HEK293 (cell line): ENCODE measurements at regions of chr16 and their contacts with region 1.

Region 1: DNA sequence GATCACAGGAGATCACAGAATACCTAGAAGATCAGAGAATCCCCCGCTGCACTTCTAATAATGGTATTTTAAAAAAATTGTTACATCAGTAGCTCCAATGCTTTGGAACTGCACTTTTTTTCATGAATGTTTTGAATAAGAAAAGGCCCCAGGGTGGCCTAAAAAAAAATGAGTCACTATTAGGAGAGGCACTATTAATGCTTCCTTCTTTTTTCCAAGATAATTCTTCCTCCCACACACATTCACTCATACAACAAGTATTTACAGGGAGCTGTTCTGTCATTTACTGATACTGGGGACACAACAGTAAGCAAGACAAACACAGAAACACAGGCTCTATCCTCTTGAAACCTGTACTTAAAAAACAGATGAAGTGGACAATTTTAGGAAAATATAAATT is 675 bp upstream of the PDZD9 start:
- H3K4me3 ChIP-seq: no peak overlapping the region
- H3K27ac ChIP-seq: no peak overlapping the region
- H3K4me1 ChIP-seq: no peaks in the 10 kb centered on the region; the same call in 1 of the 2 replicates
- CTCF ChIP-seq: no peak

Region 2: GRCh38 chr16:21989133-21989532 is 12.5 kb before region 1 on chr16:
- CTCF ChIA-PET with region 1: interaction called, 10 read pairs
- POLR2A ChIA-PET with region 1: interaction called, 3 read pairs
- H3K4me3 ChIP-seq: no peak overlapping the region
- H3K27ac ChIP-seq: no peak overlapping the region
- H3K4me1 ChIP-seq: peaks cover 13% of the 10 kb centered on the region
- CTCF ChIP-seq: no peak

Region 3: DNA sequence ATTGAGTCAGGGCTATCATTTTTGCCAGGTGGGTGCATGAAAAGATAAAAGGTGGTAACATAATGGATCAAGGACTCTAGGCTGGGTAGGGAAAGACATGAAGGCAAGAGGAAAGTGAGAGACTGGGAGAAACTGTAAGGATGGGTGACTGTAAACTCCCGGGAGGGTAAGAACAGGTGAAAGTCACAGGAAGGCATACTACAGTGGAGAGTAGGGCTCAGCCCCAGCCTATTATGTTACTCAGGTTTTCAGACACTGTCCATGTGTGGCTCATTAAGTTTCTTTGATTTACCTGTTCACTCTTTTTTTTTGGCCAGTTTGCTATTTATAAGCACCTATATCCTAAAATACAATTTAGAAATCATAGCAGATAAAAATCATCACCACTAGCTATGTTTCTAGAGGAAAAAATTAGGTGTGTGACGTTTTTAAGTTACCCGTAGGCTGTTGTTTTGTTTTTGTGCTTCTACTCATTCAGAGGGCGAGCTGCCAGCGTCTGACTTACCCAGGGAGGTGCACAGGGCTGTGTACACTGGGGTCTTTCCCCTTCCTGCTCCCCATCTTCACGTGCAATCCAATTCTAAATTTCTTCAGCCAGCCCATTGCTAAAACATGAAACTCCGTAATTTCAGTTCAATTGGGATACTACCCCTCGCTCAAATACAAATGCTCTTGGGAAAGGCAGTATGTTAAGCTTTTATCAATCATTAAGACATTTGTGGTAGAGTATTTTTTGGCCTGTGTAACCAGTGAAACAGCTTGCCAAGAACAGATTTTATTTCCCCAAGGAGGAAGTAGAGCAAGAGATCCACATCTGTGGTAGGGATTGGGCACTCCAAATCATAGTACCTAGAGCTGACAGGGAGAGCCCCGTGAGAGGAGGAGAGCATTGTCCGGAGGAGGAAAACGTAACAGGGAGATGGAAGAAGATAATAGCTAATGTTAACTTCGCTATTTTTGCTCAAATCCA is 69.1 kb after region 1 on chr16:
- CTCF ChIA-PET with region 1: interaction called, 302 read pairs
- POLR2A ChIA-PET with region 1: interaction called, 7 read pairs
- H3K4me3 ChIP-seq: no peak overlapping the region
- H3K27ac ChIP-seq: no peak overlapping the region
- H3K4me1 ChIP-seq: 0 out of 2 replicates have a peak, but pooled peaks cover 2% of the 10 kb centered on the region
- CTCF ChIP-seq: no peak

Region 4: DNA sequence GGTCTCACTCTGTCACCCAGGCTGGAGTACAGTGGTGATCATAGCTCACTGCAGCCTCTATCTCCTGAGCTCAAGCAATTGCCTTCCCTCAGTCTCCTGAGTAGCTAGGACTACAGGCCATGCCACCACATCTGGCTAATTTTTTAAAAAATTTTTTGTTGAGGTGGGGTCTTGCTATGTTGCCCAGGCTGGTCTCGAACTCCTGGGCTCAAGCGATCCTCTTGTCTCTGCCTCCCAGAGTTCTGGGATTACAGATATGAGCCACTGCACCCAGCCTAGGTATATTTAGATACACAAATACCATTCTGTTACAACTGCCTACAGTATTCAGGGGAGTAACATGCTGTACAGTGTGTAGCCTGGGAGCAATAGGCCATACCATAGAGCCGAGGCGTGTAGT is 309.9 kb after region 1 on chr16:
- CTCF ChIA-PET with region 1: no interaction called
- POLR2A ChIA-PET with region 1: no interaction called
- H3K4me3 ChIP-seq: no peak overlapping the region
- H3K27ac ChIP-seq: no peak overlapping the region
- H3K4me1 ChIP-seq: no peaks in the 10 kb centered on the region
- CTCF ChIP-seq: no peak